Mammary epithelial cell (primary cell): ENCODE measurements at regions of chr9 and their contacts with region 1.

Region 1: DNA sequence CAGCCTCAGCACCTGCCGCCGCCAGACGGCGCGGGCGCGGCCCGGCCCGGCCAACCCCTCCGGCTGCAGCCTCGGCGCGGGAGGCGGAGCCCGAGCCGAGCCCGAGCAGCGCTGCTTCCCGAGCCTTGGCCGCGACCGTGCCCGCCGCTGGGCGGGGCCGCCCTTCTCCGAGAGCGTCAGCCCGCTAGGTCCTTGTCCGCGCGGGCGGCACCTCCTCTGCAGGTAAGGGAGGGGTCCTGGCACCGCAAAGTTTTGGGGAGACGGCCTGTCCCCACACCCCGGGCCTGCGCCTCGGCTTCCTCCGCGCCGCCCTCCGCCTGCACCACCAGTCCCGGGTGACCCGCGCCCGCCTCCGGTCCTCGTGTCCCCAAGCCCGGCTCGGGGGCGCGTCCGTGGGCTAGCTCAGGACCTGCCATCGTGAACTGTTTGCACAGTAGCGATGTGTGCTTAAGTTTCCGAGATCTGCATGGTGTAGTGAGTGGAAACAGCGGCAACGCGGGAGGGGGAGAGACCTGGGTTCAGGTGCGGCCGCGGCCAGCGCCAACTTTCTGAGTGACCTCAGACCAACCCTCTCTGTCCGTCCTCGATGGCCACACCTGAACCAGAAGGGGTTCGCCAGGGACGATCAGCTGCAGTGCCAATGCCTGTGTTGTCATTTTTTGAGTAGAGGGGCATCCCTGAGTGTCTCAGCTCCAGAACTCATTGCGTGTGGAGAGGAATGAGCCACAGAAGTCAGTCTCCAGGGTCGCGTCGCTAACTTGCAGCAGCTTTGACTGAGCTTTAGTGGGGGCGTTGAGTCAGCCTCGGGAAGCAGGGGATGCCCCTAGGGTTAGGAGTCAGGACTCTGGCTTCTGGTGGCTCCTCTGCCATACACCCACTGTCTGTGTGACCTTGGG is at the start of gene FRMPD1:
- DNase-seq: peak; percentile 58
- H3K4me3 ChIP-seq: peak within 1 kb of the TSS; percentile 30 to 55 (median 54)
- H3K27ac ChIP-seq: no peak within 1 kb of the TSS
- H3K4me1 ChIP-seq: peaks cover 10% of the 10 kb centered on the region
- H3K27me3 ChIP-seq: peaks cover 24% of the 10 kb centered on the region
- CTCF ChIP-seq: no peak
- total RNA-seq, gene FRMPD1: 0.17 to 0.26 TPM

Region 2: GRCh38 chr9:37592108-37592951 is 58.8 kb before region 1 on chr9 and contains the start of gene TOMM5:
- CTCF ChIA-PET with region 1: no interaction called
- dilution Hi-C with region 1: no loop called
- in situ Hi-C with region 1: no loop called
- intact Hi-C with region 1: loop called (anchors 5 kb)
- DNase-seq: peak; percentile 90
- H3K4me3 ChIP-seq: peak within 1 kb of the TSS; percentile 95 to 98 (median 98)
- H3K27ac ChIP-seq: peak within 1 kb of the TSS; percentile 88
- H3K4me1 ChIP-seq: peaks cover 25% of the 10 kb centered on the region
- H3K27me3 ChIP-seq: no peaks in the 10 kb centered on the region
- CTCF ChIP-seq: no peak
- total RNA-seq, gene TOMM5: 69.7 to 135 TPM

Region 3: GRCh38 chr9:37706290-37706689 is 55.2 kb after region 1 on chr9:
- CTCF ChIA-PET with region 1: no interaction called
- dilution Hi-C with region 1: no loop called
- in situ Hi-C with region 1: loop called in 1 of 2 experiments (anchors 10 kb)
- intact Hi-C with region 1: no loop called
- DNase-seq: peak; percentile 69
- H3K4me3 ChIP-seq: no peak overlapping the region
- H3K27ac ChIP-seq: no peak overlapping the region
- H3K4me1 ChIP-seq: peaks cover 9% of the 10 kb centered on the region
- H3K27me3 ChIP-seq: no peaks in the 10 kb centered on the region
- CTCF ChIP-seq: no peak

Region 4: GRCh38 chr9:37753489-37754190 is 102.5 kb after region 1 on chr9 and contains the start of gene TRMT10B:
- CTCF ChIA-PET with region 1: no interaction called
- dilution Hi-C with region 1: no loop called
- in situ Hi-C with region 1: no loop called
- intact Hi-C with region 1: loop called (anchors 1 kb)
- DNase-seq: peak; percentile 67
- H3K4me3 ChIP-seq: peak within 1 kb of the TSS; percentile 60 to 74 (median 64)
- H3K27ac ChIP-seq: peak within 1 kb of the TSS; percentile 55
- H3K4me1 ChIP-seq: peaks cover 6% of the 10 kb centered on the region
- H3K27me3 ChIP-seq: no peaks in the 10 kb centered on the region
- CTCF ChIP-seq: no peak
- total RNA-seq, gene TRMT10B: 2.7 to 7.5 TPM

Region 5: DNA sequence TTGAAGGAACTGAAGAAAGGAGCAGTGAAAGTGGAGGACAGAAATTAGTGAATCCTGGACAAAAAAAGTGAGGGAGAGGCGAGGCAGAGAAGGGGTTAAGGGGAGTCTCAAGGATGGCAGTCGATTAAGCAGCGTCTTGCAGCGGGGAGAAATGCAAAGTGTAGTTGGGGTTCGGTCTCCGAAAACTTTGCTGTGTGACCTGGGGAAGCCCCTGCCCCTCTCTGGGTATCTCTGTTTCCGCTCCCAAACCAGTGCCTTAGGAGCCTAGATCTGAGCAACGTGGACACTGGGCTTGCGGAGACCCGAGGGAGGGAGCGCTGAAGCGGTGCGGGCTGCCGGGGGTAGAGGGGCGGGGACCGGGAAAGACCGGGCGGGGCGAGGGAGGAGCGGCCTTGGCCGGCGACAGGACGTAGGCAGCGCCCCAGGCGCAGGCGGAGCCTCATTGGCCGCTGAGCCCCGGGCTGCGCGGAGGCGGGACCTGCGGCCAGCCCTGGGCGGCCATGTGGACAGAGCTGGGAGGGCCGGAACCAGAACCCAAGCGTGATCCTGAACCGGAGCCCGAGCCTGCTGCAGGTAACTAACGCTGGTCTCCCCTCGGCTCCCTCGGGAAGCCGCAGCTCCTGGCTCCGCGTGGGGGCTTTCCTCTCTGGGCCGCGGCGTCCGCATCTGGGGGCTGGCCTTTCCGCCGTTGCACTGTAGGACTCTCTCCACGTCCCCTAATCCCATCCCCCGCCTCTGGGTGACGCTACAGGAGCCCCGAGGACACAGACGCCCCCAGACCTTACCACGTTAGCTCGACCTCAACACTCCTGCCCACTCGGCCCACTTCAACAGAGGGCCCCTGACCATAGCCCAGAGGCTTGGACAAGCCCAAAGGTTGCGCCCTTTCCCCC is 741.4 kb after region 1 on chr9 and contains the start of gene ALDH1B1:
- CTCF ChIA-PET with region 1: no interaction called
- dilution Hi-C with region 1: no loop called
- in situ Hi-C with region 1: no loop called
- intact Hi-C with region 1: loop called (anchors 2 kb)
- DNase-seq: peak; percentile 80
- H3K4me3 ChIP-seq: peak within 1 kb of the TSS; percentile 68 to 73 (median 72)
- H3K27ac ChIP-seq: peak within 1 kb of the TSS; percentile 25
- H3K4me1 ChIP-seq: no peaks in the 10 kb centered on the region
- H3K27me3 ChIP-seq: no peaks in the 10 kb centered on the region
- CTCF ChIP-seq: peak in 1 of 2 donors; percentile 17
- total RNA-seq, gene ALDH1B1: 30.0 to 69.8 TPM